Right cardiac atrium (tissue), 5 donors: ENCODE measurements at regions of chr9 and their contacts with region 1.

Region 1: DNA sequence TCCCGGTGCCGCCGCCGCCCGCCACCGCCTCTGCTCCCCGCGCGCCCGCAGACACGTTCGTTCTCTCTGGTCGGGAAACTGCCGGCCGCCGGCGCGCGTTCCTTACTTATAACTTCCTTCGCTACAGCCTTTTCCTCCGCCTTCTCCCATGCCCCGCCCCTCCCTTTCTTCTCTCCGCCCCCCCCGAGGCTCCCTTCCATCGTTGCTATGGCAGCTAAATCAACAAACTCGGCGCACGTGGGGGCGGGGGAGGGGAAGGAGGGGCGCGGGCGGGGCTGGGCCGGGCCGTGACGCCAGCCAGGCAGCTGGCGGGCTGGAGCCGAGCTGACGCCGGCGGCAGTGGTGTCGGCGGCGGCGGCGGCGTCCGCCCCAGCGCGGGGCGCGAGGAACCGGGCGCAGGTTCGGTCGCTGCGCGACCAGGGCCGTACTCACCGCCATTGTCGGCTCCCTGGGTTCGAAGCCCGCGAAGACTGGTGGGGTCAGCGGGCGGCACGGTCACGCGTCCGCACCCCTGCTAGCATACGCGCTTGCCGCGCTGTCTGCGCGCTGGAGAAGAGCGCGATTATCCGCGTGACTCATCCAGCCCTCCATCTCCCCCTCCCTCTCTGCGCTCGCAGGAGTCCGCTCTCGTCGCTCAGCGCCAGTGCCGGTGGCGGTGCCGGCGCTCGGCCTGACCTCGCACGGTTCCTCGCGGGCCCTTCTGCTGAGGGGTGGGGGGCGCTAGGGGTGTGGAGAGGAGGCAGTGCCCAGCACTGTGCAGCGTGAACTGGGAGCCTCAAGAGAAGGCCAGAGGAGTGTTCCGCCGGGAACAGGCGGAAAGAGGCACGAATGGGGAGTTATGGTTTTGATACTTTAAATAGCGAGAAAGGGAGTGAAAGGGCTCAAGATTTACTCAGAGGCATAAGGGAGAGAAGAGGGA is at the start of gene KLF4:
- DNase-seq: peak; percentile 92 to 97 (median 95)
- ATAC-seq: peak; percentile 82 to 90
- H3K4me3 ChIP-seq: peak within 1 kb of the TSS; percentile 76
- H3K27ac ChIP-seq: peak within 1 kb of the TSS; percentile 98
- H3K4me1 ChIP-seq: no peaks in the 10 kb centered on the region
- H3K27me3 ChIP-seq: no peaks in the 10 kb centered on the region
- total RNA-seq, gene KLF4: 37.0 to 71.6 (median 44.0) TPM

Region 2: GRCh38 chr9:106981396-106982287 is 508.3 kb before region 1 on chr9:
- intact Hi-C with region 1: no loop called
- DNase-seq: no peak
- ATAC-seq: no peak
- H3K4me3 ChIP-seq: no peak overlapping the region
- H3K27ac ChIP-seq: no peak overlapping the region
- H3K4me1 ChIP-seq: no peaks in the 10 kb centered on the region
- H3K27me3 ChIP-seq: no peaks in the 10 kb centered on the region

Region 3: DNA sequence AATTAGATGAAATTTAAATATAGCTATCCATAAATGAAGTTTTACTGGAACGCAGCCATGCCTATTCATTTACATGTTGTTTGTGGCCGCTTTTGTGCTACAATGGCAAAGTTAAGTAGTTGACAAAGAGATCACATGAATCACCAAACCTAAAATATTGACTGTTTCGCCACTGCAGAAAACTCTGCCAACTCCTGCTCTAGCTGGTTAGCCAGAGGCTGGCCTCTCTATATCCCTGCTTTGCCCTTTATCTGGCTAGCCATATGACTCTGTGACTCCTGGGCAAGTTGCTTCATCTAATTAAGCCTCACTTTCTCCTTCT is 92.3 kb before region 1 on chr9:
- intact Hi-C with region 1: no loop called
- DNase-seq: no peak
- ATAC-seq: no peak
- H3K4me3 ChIP-seq: no peak overlapping the region
- H3K27ac ChIP-seq: no peak overlapping the region
- H3K4me1 ChIP-seq: no peaks in the 10 kb centered on the region
- H3K27me3 ChIP-seq: no peaks in the 10 kb centered on the region

Region 4: GRCh38 chr9:107530679-107531078 is 40.7 kb after region 1 on chr9:
- intact Hi-C with region 1: no loop called
- DNase-seq: no peak
- ATAC-seq: no peak
- H3K4me3 ChIP-seq: no peak overlapping the region
- H3K27ac ChIP-seq: no peak overlapping the region
- H3K4me1 ChIP-seq: no peaks in the 10 kb centered on the region
- H3K27me3 ChIP-seq: no peaks in the 10 kb centered on the region

Region 5: DNA sequence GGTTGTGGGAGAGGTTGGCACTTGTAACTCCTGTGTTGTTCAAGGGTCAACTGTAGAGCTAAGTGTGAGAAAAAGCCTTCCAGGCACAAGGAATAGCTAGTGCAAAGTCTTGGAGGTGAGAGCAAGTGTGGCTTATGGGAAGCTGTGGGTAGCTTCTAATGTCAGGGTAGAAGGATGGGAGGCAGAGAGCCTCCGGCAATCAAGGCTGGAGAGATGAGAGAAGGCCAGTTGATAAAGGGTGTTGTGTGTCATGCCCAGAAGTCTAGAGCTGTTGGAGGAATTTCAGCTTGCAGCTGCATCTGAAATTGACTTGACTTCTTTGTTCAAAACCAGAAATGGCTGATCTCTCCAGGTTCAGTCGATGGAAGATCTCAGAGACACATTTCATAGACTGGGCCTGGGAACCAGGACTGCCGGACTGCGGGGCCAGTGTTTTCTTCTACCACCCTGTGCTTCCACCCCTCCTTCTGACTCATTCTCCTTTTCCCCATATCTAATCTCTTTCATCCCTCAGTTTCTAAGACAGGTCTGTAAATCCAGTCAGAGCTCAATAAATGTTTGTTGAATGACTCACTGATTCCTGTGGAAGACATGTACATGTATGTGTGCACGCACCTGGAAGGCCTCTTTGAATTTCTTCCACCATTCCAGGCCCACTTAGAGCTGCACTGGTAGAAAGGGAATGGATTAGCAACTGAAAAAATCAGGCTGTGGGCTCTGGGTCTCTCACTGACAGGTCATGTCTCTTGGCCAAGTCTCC is 67.5 kb after region 1 on chr9:
- intact Hi-C with region 1: no loop called
- DNase-seq: no peak
- ATAC-seq: no peak
- H3K4me3 ChIP-seq: no peak overlapping the region
- H3K27ac ChIP-seq: no peak overlapping the region
- H3K4me1 ChIP-seq: no peaks in the 10 kb centered on the region
- H3K27me3 ChIP-seq: no peaks in the 10 kb centered on the region

Region 6: DNA sequence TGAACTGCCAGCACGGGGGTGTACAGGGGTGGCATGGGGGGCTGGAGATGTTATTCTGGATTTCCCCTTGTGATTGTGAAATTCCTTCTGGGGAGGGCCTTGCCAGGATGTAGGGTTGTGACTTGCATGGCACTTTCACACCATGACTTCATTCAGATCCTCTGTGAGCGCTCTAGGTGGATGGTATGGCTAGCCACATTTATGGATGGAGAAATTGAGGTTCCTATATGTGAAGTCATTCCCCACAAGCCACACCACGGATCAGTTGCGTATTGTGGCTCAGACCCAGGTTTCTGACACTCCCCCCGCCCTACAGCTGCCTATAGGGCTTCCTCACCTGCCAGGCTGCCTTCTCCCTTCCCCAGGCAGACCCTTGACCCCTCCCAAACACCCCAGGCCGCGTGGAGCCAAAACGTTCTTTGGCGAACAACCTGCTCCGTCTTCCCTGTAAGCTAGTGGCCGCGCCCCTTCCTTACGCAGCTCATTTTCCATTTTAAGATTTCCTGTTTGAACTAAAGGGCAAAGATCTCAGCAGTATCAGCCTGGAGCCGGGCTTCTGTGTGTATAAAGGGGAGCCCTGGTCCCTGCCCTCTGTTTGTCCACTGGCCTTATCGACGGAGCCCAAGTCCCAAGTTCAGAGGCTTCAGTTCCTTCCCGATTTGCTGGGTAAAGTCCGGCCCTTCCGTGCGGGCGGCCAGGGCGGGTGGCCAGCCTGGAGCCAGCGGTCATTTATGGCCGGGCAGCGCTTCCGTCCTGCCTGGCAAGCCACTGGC is 97.4 kb after region 1 on chr9:
- intact Hi-C with region 1: loop called in 2 of 4 experiments (anchors 5 to 10 kb)
- DNase-seq: peak; percentile 78 to 87 (median 86)
- ATAC-seq: peak; percentile 90 to 96
- H3K4me3 ChIP-seq: no peak overlapping the region
- H3K27ac ChIP-seq: peak overlapping the region; percentile 76
- H3K4me1 ChIP-seq: peaks cover 2% of the 10 kb centered on the region
- H3K27me3 ChIP-seq: no peaks in the 10 kb centered on the region

Region 7: GRCh38 chr9:107637421-107638420 is 147.8 kb after region 1 on chr9:
- intact Hi-C with region 1: loop called (anchors 2 to 5 kb)
- DNase-seq: peak; percentile 95 to 96 (median 96)
- ATAC-seq: peak; percentile 94 to 96
- H3K4me3 ChIP-seq: peak overlapping the region; percentile 67
- H3K27ac ChIP-seq: peak overlapping the region; percentile 97
- H3K4me1 ChIP-seq: no peaks in the 10 kb centered on the region
- H3K27me3 ChIP-seq: no peaks in the 10 kb centered on the region

Region 8: DNA sequence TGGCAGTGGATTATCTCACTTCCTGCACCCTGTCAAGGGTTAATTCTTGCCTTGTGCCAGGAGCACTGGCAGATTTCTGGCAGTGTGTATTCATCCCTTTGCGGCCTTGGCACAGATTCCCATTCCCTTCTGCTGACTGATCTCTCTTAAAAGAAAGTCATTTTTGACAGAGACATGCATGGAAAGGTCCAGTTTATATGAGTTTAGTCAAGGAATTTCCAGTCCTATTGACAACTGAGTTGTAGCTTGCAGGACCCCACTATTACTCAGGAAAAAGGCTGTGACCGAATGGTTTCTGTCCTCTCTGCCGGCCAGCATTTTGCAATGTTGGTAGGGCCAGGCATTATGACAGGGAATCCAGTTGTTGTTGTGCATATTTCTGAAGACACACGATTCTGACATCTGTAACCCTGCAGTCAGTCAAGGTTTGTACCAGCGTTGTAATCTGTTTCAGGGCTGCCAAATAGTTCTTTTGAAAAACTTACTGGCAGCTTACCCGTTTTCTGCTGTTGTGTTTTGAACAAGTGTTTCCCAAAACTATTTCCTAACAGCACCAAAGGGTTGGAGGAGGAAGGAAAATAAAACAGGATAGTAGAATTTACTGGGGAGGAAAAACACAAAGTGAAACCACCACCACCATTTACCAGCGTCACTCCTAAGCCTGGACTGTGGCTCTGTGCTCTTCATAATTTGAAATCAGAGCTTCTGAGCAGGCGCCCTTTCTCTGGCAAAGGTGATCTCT is 243.0 kb after region 1 on chr9:
- intact Hi-C with region 1: loop called in 3 of 4 experiments (anchors 10 kb)
- DNase-seq: peak; percentile 49 to 74 (median 72)
- ATAC-seq: peak; percentile 72 to 75
- H3K4me3 ChIP-seq: peak overlapping the region; percentile 13
- H3K27ac ChIP-seq: peak overlapping the region; percentile 99
- H3K4me1 ChIP-seq: peaks cover 8% of the 10 kb centered on the region
- H3K27me3 ChIP-seq: no peaks in the 10 kb centered on the region

Region 9: GRCh38 chr9:108142504-108143201 is 652.7 kb after region 1 on chr9:
- intact Hi-C with region 1: loop called in 1 of 4 experiments (anchors 10 kb)
- DNase-seq: peak; percentile 91 to 96 (median 92)
- ATAC-seq: peak; percentile 99
- H3K4me3 ChIP-seq: no peak overlapping the region
- H3K27ac ChIP-seq: peak overlapping the region; percentile 97
- H3K4me1 ChIP-seq: peaks cover 5% of the 10 kb centered on the region
- H3K27me3 ChIP-seq: no peaks in the 10 kb centered on the region

Region 10: DNA sequence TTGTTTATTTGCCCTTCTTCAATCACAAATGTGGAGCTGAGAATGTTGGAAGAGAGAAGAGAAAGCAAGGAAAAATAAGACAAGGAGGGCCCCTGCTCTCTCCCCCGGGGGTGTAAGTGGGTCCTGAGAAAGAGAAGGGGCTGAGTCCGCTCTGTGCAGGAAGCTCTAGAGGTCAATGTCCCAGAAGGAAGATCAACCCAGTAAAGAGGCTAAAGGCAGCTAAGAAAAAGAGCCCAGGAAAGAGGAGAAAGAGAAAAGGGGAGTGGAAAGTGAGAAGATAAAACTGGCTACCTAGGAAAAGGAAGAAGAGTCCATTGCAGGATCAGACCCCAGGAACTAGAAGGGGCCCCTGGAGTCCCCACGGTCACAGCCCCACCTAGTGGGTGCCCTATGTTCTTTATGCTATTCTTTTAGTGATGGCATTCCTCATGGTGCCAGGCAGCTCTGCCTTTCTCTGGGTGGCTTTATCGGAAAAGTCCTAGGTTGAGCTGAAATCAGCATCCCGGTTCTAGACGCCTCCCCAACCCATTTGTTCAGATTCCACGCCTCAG is 782.5 kb after region 1 on chr9:
- intact Hi-C with region 1: loop called in 1 of 4 experiments (anchors 5 kb)
- DNase-seq: peak; percentile 40 to 76 (median 71)
- ATAC-seq: peak; percentile 80 to 84
- H3K4me3 ChIP-seq: no peak overlapping the region
- H3K27ac ChIP-seq: no peak overlapping the region
- H3K4me1 ChIP-seq: no peaks in the 10 kb centered on the region
- H3K27me3 ChIP-seq: no peaks in the 10 kb centered on the region

Region 11: GRCh38 chr9:108565651-108566378 is 1075.9 kb after region 1 on chr9:
- intact Hi-C with region 1: loop called in 2 of 4 experiments (anchors 5 to 10 kb)
- DNase-seq: peak in 2 of 3 donors; percentile 27 to 72
- ATAC-seq: peak; percentile 92 to 95
- H3K4me3 ChIP-seq: no peak overlapping the region
- H3K27ac ChIP-seq: no peak overlapping the region
- H3K4me1 ChIP-seq: peaks cover 4% of the 10 kb centered on the region
- H3K27me3 ChIP-seq: no peaks in the 10 kb centered on the region